Activated B cell treated with CpG ODN at 0.5 μM for 24 hours (primary cell): ENCODE measurements at regions of chr16 and their contacts with region 1.

Region 1: GRCh38 chr16:67935402-67936123 is 1.1 kb downstream of the PSMB10 start:
- DNase-seq: peak; percentile 85
- ATAC-seq: peak; percentile 89
- H3K4me3 Mint-ChIP-seq: peak overlapping the region; percentile 99
- H3K27ac Mint-ChIP-seq: peak overlapping the region; percentile 98
- H3K4me1 Mint-ChIP-seq: peaks cover 31% of the 10 kb centered on the region
- H3K27me3 Mint-ChIP-seq: no peaks in the 10 kb centered on the region
- CTCF ChIP-seq: no peak

Region 2: GRCh38 chr16:67667817-67668494 is 267.6 kb before region 1 on chr16:
- CTCF ChIA-PET with region 1: interaction called, 4 read pairs
- POLR2A ChIA-PET with region 1: interaction called, 4 read pairs
- intact Hi-C with region 1: loop called (anchors 2 kb)
- DNase-seq: peak; percentile 66
- ATAC-seq: peak; percentile 84
- H3K4me3 Mint-ChIP-seq: peak overlapping the region; percentile 87
- H3K27ac Mint-ChIP-seq: peak overlapping the region; percentile 85
- H3K4me1 Mint-ChIP-seq: peaks cover 49% of the 10 kb centered on the region
- H3K27me3 Mint-ChIP-seq: no peaks in the 10 kb centered on the region
- CTCF ChIP-seq: no peak

Region 3: DNA sequence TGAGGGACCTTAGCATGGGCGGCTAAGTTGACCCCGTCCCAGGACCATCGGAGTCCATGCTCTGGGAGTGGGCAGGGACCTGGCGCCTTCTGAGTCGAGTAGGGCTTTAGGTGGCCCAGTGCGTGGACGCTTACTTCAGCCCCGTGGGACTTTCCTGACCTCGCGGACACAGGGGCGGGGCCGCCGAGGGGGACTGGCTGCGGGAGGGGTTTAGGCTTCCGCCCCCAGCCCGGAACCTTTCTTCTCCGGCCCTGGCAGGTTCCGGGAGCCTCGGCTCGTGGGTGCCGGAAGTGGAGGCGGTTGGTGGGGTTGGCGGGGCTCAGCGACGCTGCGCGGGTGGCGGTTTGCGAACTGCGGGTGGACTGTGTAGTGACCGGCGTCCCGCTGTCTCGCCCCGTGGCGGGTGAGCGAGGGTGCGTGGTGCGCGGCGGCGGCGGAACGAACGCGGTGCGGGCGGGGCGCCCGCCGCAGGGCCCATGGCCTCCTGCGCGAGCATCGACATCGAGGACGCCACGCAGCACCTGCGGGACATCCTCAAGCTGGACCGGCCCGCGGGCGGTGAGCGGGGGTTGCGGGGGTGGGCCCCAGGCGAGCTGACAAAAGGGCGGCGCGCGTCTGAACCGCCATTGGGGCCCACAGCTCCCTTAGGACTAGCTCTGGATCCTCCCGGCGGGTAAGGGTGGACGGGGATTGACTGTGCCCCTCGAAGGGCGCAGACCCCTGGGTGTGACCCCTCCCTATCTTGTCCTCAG is 62.6 kb before region 1 on chr16 and contains the start of gene EDC4:
- CTCF ChIA-PET with region 1: no interaction called
- POLR2A ChIA-PET with region 1: interaction called, 6 read pairs
- intact Hi-C with region 1: loop called (anchors 1 kb)
- DNase-seq: peak; percentile 89
- ATAC-seq: peak; percentile 93
- H3K4me3 Mint-ChIP-seq: peak within 1 kb of the TSS; percentile 90
- H3K27ac Mint-ChIP-seq: peak within 1 kb of the TSS; percentile 84
- H3K4me1 Mint-ChIP-seq: peaks cover 36% of the 10 kb centered on the region
- H3K27me3 Mint-ChIP-seq: no peaks in the 10 kb centered on the region
- CTCF ChIP-seq: no peak
- total RNA-seq, gene EDC4: 71.5 TPM in 2 replicates

Region 4: GRCh38 chr16:67968400-67969253 is 33.1 kb after region 1 on chr16 and contains the start of gene SLC12A4:
- CTCF ChIA-PET with region 1: no interaction called
- POLR2A ChIA-PET with region 1: interaction called, 25 read pairs
- intact Hi-C with region 1: loop called (anchors 1 kb)
- DNase-seq: peak; percentile 87
- ATAC-seq: peak; percentile 93
- H3K4me3 Mint-ChIP-seq: peak within 1 kb of the TSS; percentile 96
- H3K27ac Mint-ChIP-seq: peak within 1 kb of the TSS; percentile 80
- H3K4me1 Mint-ChIP-seq: peaks cover 28% of the 10 kb centered on the region
- H3K27me3 Mint-ChIP-seq: no peaks in the 10 kb centered on the region
- CTCF ChIP-seq: no peak
- total RNA-seq, gene SLC12A4: 24.6 and 37.9 TPM in 2 replicates

Region 5: GRCh38 chr16:67993189-67994039 is 57.9 kb after region 1 on chr16:
- CTCF ChIA-PET with region 1: interaction called, 6 read pairs
- POLR2A ChIA-PET with region 1: interaction called, 30 read pairs
- intact Hi-C with region 1: loop called (anchors 1 kb)
- DNase-seq: peak; percentile 88
- ATAC-seq: peak; percentile 77
- H3K4me3 Mint-ChIP-seq: peak overlapping the region; percentile 77
- H3K27ac Mint-ChIP-seq: peak overlapping the region; percentile 98
- H3K4me1 Mint-ChIP-seq: peaks cover 78% of the 10 kb centered on the region
- H3K27me3 Mint-ChIP-seq: no peaks in the 10 kb centered on the region
- CTCF ChIP-seq: peak; percentile 47

Region 6: DNA sequence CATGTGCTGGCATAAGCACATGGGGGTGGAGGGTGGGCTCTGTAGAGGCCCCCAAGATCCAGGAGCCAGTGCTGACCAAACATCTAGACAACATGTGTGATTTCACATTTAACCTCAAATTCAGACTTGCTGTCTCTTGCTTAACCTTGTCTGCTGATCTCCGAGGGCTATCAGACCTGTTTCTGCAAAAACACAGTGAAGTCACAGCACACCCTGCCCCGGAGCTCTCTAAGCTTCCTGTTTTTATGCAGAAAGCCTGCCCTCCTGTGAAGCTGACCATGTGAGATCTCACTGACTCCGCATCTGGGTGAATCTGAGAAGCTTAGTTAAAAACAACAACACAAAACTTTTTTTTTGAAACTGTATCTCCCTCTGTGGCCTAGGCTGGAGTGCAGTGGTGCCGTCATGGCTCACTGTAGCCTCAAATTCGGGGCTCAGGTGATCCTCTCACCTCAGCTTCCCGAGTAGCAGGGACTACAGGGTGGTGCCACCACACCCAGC is 70.3 kb after region 1 on chr16:
- CTCF ChIA-PET with region 1: no interaction called
- POLR2A ChIA-PET with region 1: interaction called, 30 read pairs
- intact Hi-C with region 1: no loop called
- DNase-seq: no peak
- ATAC-seq: peak; percentile 98
- H3K4me3 Mint-ChIP-seq: peak overlapping the region; percentile 58
- H3K27ac Mint-ChIP-seq: peak overlapping the region; percentile 95
- H3K4me1 Mint-ChIP-seq: peaks cover 40% of the 10 kb centered on the region
- H3K27me3 Mint-ChIP-seq: no peaks in the 10 kb centered on the region
- CTCF ChIP-seq: no peak

Region 7: DNA sequence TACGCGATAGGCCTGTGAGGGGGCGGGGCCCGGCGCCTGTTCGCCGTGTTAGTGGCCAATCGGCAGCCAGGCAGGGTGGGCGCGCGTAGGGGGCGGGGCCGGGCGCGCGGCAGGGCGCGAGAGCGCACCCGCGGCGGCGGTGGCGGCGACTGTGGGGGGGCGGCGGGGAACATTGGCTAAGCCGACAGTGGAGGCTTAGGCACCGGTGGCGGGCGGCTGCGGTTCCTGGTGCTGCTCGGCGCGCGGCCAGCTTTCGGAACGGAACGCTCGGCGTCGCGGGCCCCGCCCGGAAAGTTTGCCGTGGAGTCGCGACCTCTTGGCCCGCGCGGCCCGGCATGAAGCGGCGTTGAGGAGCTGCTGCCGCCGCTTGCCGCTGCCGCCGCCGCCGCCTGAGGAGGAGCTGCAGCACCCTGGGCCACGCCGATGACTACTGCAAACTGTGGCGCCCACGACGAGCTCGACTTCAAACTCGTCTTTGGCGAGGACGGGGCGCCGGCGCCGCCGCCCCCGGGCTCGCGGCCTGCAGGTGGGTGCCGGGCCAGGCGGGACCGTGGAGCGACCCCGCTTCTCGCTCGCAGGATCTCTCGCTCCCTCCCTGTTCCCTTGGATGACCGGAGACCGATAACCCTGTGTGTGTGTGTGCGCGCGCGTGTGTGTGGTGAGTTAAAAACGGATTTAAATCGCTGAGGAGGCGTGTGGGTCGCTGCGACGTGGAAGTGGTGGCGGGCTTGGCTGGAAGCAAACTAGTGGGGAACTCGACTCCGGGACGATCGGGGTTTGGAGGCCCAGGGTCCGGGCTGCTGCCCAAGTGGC is 149.9 kb after region 1 on chr16 and contains the start of gene NFATC3:
- CTCF ChIA-PET with region 1: no interaction called
- POLR2A ChIA-PET with region 1: interaction called, 20 read pairs
- intact Hi-C with region 1: loop called (anchors 1 kb)
- DNase-seq: peak; percentile 96
- ATAC-seq: peak; percentile 78
- H3K4me3 Mint-ChIP-seq: peak within 1 kb of the TSS; percentile 98
- H3K27ac Mint-ChIP-seq: peak within 1 kb of the TSS; percentile 97
- H3K4me1 Mint-ChIP-seq: peaks cover 77% of the 10 kb centered on the region
- H3K27me3 Mint-ChIP-seq: no peaks in the 10 kb centered on the region
- CTCF ChIP-seq: no peak
- total RNA-seq, gene NFATC3: 64.8 and 72.0 TPM in 2 replicates

Region 8: GRCh38 chr16:68200088-68200783 is 264.7 kb after region 1 on chr16:
- CTCF ChIA-PET with region 1: no interaction called
- POLR2A ChIA-PET with region 1: no interaction called
- intact Hi-C with region 1: no loop called
- DNase-seq: no peak
- ATAC-seq: peak; percentile 45
- H3K4me3 Mint-ChIP-seq: no peak overlapping the region
- H3K27ac Mint-ChIP-seq: peak overlapping the region; percentile 55
- H3K4me1 Mint-ChIP-seq: peaks cover 8% of the 10 kb centered on the region
- H3K27me3 Mint-ChIP-seq: no peaks in the 10 kb centered on the region
- CTCF ChIP-seq: no peak